ENCODE measurements at regions of chr16 and their contacts with region 1.

Region 1: GRCh38 chr16:50665128-50665878 is 15.8 kb downstream of the SNX20 start:
- DNase-seq: peak; percentile 69
- H3K4me3 Mint-ChIP-seq: peak overlapping the region; percentile 62
- H3K27ac Mint-ChIP-seq: peak overlapping the region; percentile 39
- H3K4me1 Mint-ChIP-seq: no peaks in the 10 kb centered on the region
- H3K27me3 Mint-ChIP-seq: no peaks in the 10 kb centered on the region
- CTCF ChIP-seq: peak; percentile 83

Region 2: GRCh38 chr16:50024684-50025536 is 640.4 kb before region 1 on chr16 and contains the start of gene CNEP1R1:
- CTCF ChIA-PET with region 1: interaction called, 13 read pairs
- POLR2A ChIA-PET with region 1: interaction called, 5 read pairs
- intact Hi-C with region 1: loop called (anchors 2 kb)
- DNase-seq: peak; percentile 96
- H3K4me3 Mint-ChIP-seq: peak within 1 kb of the TSS; percentile 91
- H3K27ac Mint-ChIP-seq: peak within 1 kb of the TSS; percentile 82
- H3K4me1 Mint-ChIP-seq: peaks cover 5% of the 10 kb centered on the region
- H3K27me3 Mint-ChIP-seq: peaks cover 17% of the 10 kb centered on the region
- CTCF ChIP-seq: peak; percentile 99
- total RNA-seq, gene CNEP1R1: 22.0 and 23.2 TPM in 2 replicates

Region 3: DNA sequence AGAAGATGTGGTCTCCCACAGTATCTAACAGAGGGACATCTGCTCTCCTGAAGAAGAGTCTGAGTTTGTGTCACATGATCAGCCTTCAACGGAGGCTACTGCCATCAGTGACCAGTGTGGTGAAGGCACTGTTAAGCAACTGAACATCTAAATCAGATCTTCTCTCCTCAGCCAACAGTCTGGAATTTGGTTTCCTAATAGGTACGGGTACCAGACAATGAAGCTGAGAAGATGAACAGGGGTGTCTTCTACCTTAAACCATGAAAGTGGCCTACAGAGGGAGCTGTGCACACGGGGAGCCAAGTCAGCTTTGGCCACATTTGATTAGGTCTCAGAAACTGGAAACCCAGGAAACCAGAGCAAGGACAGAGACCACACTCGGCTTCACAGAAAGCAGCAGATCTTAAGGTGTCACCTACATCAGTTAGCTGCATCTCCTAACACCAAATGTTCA is 338.3 kb before region 1 on chr16:
- CTCF ChIA-PET with region 1: interaction called, 22 read pairs
- POLR2A ChIA-PET with region 1: no interaction called
- intact Hi-C with region 1: loop called (anchors 2 kb)
- DNase-seq: peak; percentile 54
- H3K4me3 Mint-ChIP-seq: no peak overlapping the region
- H3K27ac Mint-ChIP-seq: no peak overlapping the region
- H3K4me1 Mint-ChIP-seq: no peaks in the 10 kb centered on the region
- H3K27me3 Mint-ChIP-seq: no peaks in the 10 kb centered on the region
- CTCF ChIP-seq: peak; percentile 29

Region 4: DNA sequence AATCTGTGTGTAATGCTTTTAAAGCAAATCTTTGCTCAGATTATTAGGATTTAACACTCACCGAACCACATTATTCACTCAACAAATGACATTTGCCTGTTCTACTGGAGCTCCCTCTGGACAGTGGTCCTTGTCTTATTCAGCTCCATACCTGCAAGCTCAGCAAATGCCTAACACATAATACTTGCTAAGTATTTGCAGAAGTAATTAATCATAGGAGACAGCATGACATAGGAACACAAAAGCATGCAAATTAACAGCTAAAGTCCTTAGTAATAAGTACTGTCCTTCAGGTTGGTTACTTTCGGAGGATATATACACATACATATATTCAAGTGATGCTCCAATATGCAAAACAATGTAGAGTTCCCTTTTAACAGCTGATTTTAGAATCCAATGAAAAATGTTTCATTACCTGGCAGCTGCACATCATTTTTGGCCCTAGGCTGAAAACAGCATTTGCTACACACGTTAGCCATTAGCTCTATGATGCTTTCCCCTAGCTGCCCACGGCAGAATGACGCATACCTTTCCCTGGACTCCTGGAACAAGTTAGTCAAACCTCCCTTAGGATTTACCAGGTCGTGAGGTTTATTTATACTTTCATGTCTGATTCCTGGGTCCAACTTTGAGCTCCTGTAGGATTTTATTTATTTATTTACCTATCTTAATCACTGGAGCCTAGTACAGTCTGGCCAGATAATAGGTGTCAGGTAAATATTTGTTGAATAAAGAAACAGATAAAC is 305.1 kb before region 1 on chr16:
- CTCF ChIA-PET with region 1: interaction called, 72 read pairs
- POLR2A ChIA-PET with region 1: interaction called, 5 read pairs
- intact Hi-C with region 1: no loop called
- DNase-seq: peak; percentile 70
- H3K4me3 Mint-ChIP-seq: no peak overlapping the region
- H3K27ac Mint-ChIP-seq: peak overlapping the region; percentile 87
- H3K4me1 Mint-ChIP-seq: peaks cover 33% of the 10 kb centered on the region
- H3K27me3 Mint-ChIP-seq: no peaks in the 10 kb centered on the region
- CTCF ChIP-seq: no peak

Region 5: GRCh38 chr16:50373780-50374179 is 291.5 kb before region 1 on chr16:
- CTCF ChIA-PET with region 1: interaction called, 212 read pairs
- POLR2A ChIA-PET with region 1: interaction called, 5 read pairs
- intact Hi-C with region 1: loop called (anchors 1 kb)
- DNase-seq: no peak
- H3K4me3 Mint-ChIP-seq: no peak overlapping the region
- H3K27ac Mint-ChIP-seq: no peak overlapping the region
- H3K4me1 Mint-ChIP-seq: peaks cover 7% of the 10 kb centered on the region
- H3K27me3 Mint-ChIP-seq: no peaks in the 10 kb centered on the region
- CTCF ChIP-seq: no peak

Region 6: GRCh38 chr16:50644729-50645128 is 20.6 kb before region 1 on chr16:
- CTCF ChIA-PET with region 1: interaction called, 19 read pairs
- POLR2A ChIA-PET with region 1: no interaction called
- intact Hi-C with region 1: no loop called
- DNase-seq: peak; percentile 28
- H3K4me3 Mint-ChIP-seq: no peak overlapping the region
- H3K27ac Mint-ChIP-seq: no peak overlapping the region
- H3K4me1 Mint-ChIP-seq: no peaks in the 10 kb centered on the region
- H3K27me3 Mint-ChIP-seq: peaks cover 10% of the 10 kb centered on the region
- CTCF ChIP-seq: peak; percentile 20

Region 7: GRCh38 chr16:50741808-50742575 is 76.7 kb after region 1 on chr16 and contains the start of gene CYLD:
- CTCF ChIA-PET with region 1: interaction called, 251 read pairs
- POLR2A ChIA-PET with region 1: interaction called, 8 read pairs
- intact Hi-C with region 1: no loop called
- DNase-seq: peak; percentile 100
- H3K4me3 Mint-ChIP-seq: peak within 1 kb of the TSS; percentile 73
- H3K27ac Mint-ChIP-seq: peak within 1 kb of the TSS; percentile 91
- H3K4me1 Mint-ChIP-seq: peaks cover 42% of the 10 kb centered on the region
- H3K27me3 Mint-ChIP-seq: no peaks in the 10 kb centered on the region
- CTCF ChIP-seq: no peak
- total RNA-seq, gene CYLD: 53.7 and 69.1 TPM in 2 replicates